Heart left ventricle (tissue), 16 donors: ENCODE measurements at regions of chr1 and their contacts with region 1.

Region 1: DNA sequence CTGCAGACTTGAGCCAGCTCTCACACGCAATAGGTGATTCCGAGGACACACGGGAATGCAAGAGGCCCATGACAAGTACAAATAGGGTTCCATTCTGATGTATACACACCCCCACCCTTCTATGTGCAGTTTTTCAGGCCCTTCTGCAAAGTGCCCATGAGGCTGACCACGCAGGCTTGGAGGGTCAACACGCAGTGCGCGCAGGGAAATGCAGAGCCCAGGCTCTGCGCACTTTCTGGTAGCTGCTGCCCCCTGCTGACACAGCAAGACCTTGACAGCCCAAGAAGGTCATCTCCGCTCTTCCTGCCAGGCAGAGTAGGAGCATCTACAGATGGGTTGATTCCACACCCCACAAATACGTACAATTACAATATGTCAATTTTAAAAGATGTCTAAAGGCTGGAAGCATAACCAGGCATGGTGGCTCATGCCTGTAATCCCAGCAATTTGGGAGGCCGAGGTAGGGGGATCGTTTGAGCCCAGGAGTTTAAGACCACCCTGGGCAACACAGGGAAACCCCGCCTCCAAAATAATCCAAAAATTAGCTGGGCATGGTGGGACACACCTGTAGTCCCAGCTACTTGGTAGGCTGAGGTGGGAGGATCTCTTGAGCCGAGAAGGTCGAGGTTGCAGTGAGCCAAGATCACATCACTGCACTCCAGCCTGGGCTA is 18.5 kb downstream of the SH3BP5L start:
- DNase-seq: peak; percentile 46 to 82 (median 64)
- ATAC-seq: peak; percentile 43 to 83 (median 78)
- H3K4me3 ChIP-seq: no peak overlapping the region
- H3K27ac ChIP-seq: peak overlapping the region in 1 of 12 donors; percentile 74
- H3K4me1 ChIP-seq: peaks cover 0 to 55% (median 19%) of the 10 kb centered on the region in 12 donors
- H3K27me3 ChIP-seq: peaks cover 0 to 4% (median 0%) of the 10 kb centered on the region in 9 donors
- CTCF ChIP-seq: peak; percentile 53 to 81 (median 69)
- POLR2A ChIP-seq: no peak

Region 2: GRCh38 chr1:247390116-247390791 is 1416.9 kb before region 1 on chr1:
- intact Hi-C with region 1: loop called in 1 of 10 experiments (anchors 5 kb)
- DNase-seq: peak; percentile 69 to 78 (median 75)
- ATAC-seq: peak; percentile 88 to 96 (median 92)
- H3K4me3 ChIP-seq: peak overlapping the region in 7 of 12 donors; percentile 8 to 46 (median 36)
- H3K27ac ChIP-seq: peak overlapping the region in 2 of 12 donors; percentile 38 to 76
- H3K4me1 ChIP-seq: peaks cover 0 to 26% (median 0%) of the 10 kb centered on the region in 12 donors
- H3K27me3 ChIP-seq: peaks cover 0 to 10% (median 0%) of the 10 kb centered on the region in 9 donors
- CTCF ChIP-seq: peak in 11 of 12 donors; percentile 70 to 94 (median 82)
- POLR2A ChIP-seq: no peak

Region 3: GRCh38 chr1:248404024-248404423 is 403.2 kb before region 1 on chr1:
- intact Hi-C with region 1: loop called in 1 of 10 experiments (anchors 5 kb)
- DNase-seq: no peak
- ATAC-seq: no peak
- H3K4me3 ChIP-seq: no peak overlapping the region
- H3K27ac ChIP-seq: no peak overlapping the region
- H3K4me1 ChIP-seq: no peaks in the 10 kb centered on the region
- H3K27me3 ChIP-seq: no peaks in the 10 kb centered on the region
- CTCF ChIP-seq: no peak
- POLR2A ChIP-seq: no peak

Region 4: GRCh38 chr1:248622570-248623001 is 184.6 kb before region 1 on chr1:
- intact Hi-C with region 1: loop called in 4 of 10 experiments (anchors 2 to 5 kb)
- DNase-seq: no peak
- ATAC-seq: peak in 1 of 4 donors; percentile 56
- H3K4me3 ChIP-seq: no peak overlapping the region
- H3K27ac ChIP-seq: no peak overlapping the region
- H3K4me1 ChIP-seq: no peaks in the 10 kb centered on the region
- H3K27me3 ChIP-seq: peaks cover 0 to 6% (median 0%) of the 10 kb centered on the region in 9 donors
- CTCF ChIP-seq: peak in 9 of 12 donors; percentile 18 to 54 (median 34)
- POLR2A ChIP-seq: no peak

Region 5: GRCh38 chr1:248696261-248696660 is 110.9 kb before region 1 on chr1:
- intact Hi-C with region 1: loop called in 2 of 10 experiments (anchors 5 kb)
- DNase-seq: no peak
- ATAC-seq: peak in 2 of 4 donors; percentile 39 to 41
- H3K4me3 ChIP-seq: no peak overlapping the region
- H3K27ac ChIP-seq: no peak overlapping the region
- H3K4me1 ChIP-seq: no peaks in the 10 kb centered on the region
- H3K27me3 ChIP-seq: peaks cover 0 to 12% (median 0%) of the 10 kb centered on the region in 9 donors
- CTCF ChIP-seq: peak in 6 of 12 donors; percentile 6 to 27 (median 20)
- POLR2A ChIP-seq: no peak

Region 6: GRCh38 chr1:248703674-248704073 is 103.5 kb before region 1 on chr1:
- intact Hi-C with region 1: loop called in 2 of 10 experiments (anchors 5 kb)
- DNase-seq: no peak
- ATAC-seq: no peak
- H3K4me3 ChIP-seq: no peak overlapping the region
- H3K27ac ChIP-seq: no peak overlapping the region
- H3K4me1 ChIP-seq: no peaks in the 10 kb centered on the region
- H3K27me3 ChIP-seq: peaks cover 0 to 14% (median 0%) of the 10 kb centered on the region in 9 donors
- CTCF ChIP-seq: peak in 3 of 12 donors; percentile 7 to 18 (median 9)
- POLR2A ChIP-seq: no peak

Region 7: DNA sequence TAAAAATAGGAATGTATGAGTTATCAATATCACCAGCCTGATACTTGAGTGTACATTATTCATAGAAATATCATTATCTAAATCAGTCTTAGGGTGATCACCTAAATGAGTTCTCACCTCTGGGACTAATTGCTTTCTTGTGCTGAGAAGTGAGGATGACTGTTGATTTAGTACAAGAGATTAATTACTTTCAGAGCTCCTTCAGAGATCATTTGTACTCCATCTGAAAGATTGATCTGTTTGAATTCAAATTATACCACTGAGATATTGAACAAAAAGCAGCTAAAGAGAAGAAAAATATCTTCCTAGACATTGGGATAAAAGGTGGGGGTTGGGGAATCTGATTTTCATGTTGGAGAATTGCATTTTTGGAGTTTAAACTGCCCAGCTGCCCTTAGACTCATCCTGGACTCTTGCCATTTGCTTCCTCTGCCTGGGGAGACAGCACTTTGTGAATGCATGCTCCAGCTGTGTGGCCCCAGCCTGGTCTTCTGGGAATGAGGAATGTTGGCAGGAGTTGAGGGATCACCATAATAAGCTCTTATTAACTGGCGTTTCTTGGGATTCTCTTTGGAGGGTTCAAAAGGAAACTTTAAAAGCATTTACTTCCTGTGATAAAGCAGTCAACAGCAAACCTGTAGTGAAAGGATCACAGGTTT is 79.2 kb after region 1 on chr1:
- intact Hi-C with region 1: no loop called
- DNase-seq: no peak
- ATAC-seq: no peak
- H3K4me3 ChIP-seq: no peak overlapping the region
- H3K27ac ChIP-seq: no peak overlapping the region
- H3K4me1 ChIP-seq: peaks cover 0 to 4% (median 0%) of the 10 kb centered on the region in 12 donors
- H3K27me3 ChIP-seq: peaks cover 0 to 5% (median 0%) of the 10 kb centered on the region in 9 donors
- CTCF ChIP-seq: no peak
- POLR2A ChIP-seq: no peak

Region 8: DNA sequence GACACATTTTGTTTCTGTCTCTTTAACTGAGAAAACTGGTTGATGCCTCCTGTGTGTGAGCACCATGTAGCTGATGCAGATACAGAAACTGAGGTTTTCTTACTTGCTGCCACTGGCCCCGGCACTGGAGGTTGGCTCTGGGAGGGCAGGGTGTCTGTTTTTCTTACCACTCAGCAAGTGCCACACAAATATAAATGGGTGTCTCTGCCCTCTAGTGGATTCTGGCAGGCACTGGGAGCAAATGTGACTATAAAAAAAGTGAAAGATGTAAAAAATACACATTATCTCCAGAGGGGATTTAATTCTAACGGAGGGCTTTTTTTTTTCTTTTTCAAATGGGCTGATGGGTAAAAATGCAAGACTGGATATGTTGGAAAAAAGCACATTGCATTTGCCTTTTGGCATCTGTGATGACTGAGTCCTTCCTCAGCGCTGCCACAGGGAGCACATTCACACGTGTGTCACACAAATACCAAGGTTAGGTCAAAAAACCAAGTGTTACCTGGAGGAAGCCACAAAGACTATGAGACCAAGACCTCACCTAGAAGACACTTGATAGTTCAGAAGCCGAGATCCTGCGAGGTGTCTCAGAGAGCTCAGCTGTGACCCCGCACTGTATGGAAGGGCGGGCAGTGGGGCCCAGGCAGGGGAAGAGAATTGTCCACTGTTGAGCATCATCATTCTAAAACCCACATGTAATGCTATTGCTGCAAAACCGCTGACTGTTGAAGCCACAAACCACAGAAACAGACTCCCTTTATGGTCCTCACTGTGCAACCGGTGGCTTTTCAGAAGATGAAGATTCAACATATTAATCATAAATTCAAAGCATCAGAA is 117.7 kb after region 1 on chr1:
- intact Hi-C with region 1: no loop called
- DNase-seq: peak in 2 of 5 donors; percentile 30 to 38
- ATAC-seq: peak in 3 of 4 donors; percentile 53 to 67 (median 66)
- H3K4me3 ChIP-seq: no peak overlapping the region
- H3K27ac ChIP-seq: no peak overlapping the region
- H3K4me1 ChIP-seq: peaks cover 0 to 15% (median 0%) of the 10 kb centered on the region in 12 donors
- H3K27me3 ChIP-seq: no peaks in the 10 kb centered on the region
- CTCF ChIP-seq: peak; percentile 47 to 67 (median 60)
- POLR2A ChIP-seq: no peak